Ascending aorta (tissue), 2 donors: ENCODE measurements at regions of chr10 and their contacts with region 1.

Region 1: GRCh38 chr10:44959247-44960087 is at the start of gene RASSF4:
- DNase-seq: peak in 1 of 2 donors; percentile 95
- H3K4me3 ChIP-seq: peak within 1 kb of the TSS; percentile 78 to 93
- H3K27ac ChIP-seq: peak within 1 kb of the TSS; percentile 86 to 90
- H3K4me1 ChIP-seq: peaks cover 13 to 40% of the 10 kb centered on the region in 2 donors
- H3K27me3 ChIP-seq: no peaks in the 10 kb centered on the region
- CTCF ChIP-seq: peak in 1 of 3 experiments; percentile 15
- total RNA-seq, gene RASSF4: 40.0 TPM

Region 2: GRCh38 chr10:44832595-44833390 is 126.7 kb before region 1 on chr10:
- intact Hi-C with region 1: no loop called
- DNase-seq: no peak
- H3K4me3 ChIP-seq: no peak overlapping the region
- H3K27ac ChIP-seq: no peak overlapping the region
- H3K4me1 ChIP-seq: no peaks in the 10 kb centered on the region
- H3K27me3 ChIP-seq: no peaks in the 10 kb centered on the region
- CTCF ChIP-seq: no peak

Region 3: DNA sequence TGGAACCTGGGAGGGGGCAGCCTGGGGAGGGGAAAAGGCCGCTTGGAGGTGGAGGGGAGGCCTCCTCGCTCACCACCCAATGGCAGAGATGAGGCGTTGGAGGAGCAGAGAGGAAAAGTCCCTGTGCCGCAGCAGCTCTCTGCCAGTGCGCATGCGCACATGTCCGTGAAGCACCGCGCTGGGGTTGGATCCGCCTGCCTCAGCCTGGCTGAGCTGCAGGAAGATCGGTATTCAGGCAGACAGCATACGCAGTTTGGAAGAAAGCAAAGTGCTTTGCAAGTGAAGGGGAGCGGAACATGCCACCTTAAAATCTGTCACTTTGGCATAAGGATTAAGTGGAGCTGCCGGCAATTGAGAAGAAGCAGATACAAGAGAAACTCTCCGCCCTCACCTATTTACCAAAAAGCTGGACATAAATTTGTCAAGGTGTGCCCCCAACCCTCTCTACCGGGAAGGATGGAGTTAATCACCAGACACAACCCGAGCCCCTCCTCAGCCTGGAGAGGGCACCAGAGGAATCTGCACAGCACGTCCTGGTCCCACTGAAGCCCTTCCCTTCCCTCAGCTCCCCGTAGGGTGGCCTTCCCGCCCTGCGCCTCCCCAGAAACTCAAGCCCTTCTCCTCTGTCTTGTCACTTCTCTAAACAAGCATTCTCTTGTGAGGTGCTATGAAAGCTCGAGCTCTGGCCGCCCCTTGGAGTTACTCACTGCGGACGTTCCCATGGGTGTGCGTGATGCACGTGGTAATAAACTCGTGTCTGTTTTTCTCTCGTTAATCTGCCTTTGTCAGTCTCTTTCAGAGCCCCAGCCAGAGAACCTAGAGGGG is 80.5 kb before region 1 on chr10:
- intact Hi-C with region 1: loop called (anchors 5 kb)
- DNase-seq: peak; percentile 43 to 88
- H3K4me3 ChIP-seq: peak overlapping the region; percentile 49 to 63
- H3K27ac ChIP-seq: no peak overlapping the region
- H3K4me1 ChIP-seq: peaks cover 7 to 25% of the 10 kb centered on the region in 2 donors
- H3K27me3 ChIP-seq: no peaks in the 10 kb centered on the region
- CTCF ChIP-seq: no peak

Region 4: DNA sequence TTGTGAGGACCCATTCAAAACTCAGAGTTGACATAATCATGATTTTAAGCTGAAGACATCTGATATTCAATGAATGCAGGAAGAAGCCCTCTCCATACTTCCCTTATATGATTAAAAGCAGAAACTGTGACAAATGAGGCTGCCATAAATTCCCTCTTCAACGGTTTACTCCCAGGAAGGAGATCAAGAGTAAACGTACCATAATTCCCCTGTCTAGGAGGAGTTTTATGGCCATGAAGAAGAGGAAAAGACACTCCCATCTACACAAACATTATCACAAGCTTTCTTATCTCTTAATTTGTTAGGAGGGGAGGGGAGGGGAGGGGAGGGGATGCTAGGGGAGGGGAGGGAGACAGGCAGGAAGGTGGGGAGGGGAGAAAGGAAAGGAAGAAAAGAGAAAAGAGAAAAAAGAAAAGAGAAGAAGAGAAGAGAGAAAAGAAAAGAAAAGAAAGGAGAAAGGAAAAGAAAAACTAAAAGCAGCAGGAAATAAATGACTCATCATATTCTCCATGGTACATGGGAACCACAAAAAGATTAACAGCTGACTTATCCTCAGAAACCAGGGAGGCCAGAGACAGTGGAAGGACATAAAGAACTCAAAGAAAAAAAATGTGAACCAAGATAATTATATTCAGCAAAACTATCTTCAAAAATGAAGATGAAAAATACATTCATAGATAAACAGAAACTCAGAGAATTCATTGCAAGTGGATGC is 536.1 kb after region 1 on chr10:
- intact Hi-C with region 1: no loop called
- DNase-seq: no peak
- H3K4me3 ChIP-seq: no peak overlapping the region
- H3K27ac ChIP-seq: no peak overlapping the region
- H3K4me1 ChIP-seq: no peaks in the 10 kb centered on the region
- H3K27me3 ChIP-seq: no peaks in the 10 kb centered on the region
- CTCF ChIP-seq: no peak